Mammary epithelial cell (primary cell): ENCODE measurements at regions of chr14 and their contacts with region 1.

Region 1: DNA sequence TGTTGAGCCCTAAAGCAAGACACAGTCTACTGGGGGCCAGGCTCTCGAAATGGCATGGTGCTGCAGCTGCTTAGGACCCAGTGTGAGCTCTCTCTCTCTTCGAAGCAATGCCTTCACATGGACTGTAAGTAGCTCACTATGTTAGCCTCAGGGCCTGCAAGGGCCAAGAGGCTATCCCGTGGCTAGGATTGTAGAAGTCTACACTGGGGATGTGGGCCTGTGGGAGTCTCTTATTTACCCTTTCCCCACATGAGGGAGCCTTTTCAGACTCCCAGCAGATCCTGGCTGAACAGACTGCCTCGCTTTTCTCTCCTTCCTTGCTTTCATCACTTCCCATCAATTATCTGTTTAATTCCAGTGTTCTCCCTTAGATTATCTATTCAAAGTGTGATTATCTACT is 101.4 kb downstream of the GPR65 start:
- DNase-seq: no peak
- H3K4me3 ChIP-seq: no peak overlapping the region
- H3K27ac ChIP-seq: no peak overlapping the region
- H3K4me1 ChIP-seq: no peaks in the 10 kb centered on the region
- H3K27me3 ChIP-seq: no peaks in the 10 kb centered on the region
- CTCF ChIP-seq: no peak

Region 2: DNA sequence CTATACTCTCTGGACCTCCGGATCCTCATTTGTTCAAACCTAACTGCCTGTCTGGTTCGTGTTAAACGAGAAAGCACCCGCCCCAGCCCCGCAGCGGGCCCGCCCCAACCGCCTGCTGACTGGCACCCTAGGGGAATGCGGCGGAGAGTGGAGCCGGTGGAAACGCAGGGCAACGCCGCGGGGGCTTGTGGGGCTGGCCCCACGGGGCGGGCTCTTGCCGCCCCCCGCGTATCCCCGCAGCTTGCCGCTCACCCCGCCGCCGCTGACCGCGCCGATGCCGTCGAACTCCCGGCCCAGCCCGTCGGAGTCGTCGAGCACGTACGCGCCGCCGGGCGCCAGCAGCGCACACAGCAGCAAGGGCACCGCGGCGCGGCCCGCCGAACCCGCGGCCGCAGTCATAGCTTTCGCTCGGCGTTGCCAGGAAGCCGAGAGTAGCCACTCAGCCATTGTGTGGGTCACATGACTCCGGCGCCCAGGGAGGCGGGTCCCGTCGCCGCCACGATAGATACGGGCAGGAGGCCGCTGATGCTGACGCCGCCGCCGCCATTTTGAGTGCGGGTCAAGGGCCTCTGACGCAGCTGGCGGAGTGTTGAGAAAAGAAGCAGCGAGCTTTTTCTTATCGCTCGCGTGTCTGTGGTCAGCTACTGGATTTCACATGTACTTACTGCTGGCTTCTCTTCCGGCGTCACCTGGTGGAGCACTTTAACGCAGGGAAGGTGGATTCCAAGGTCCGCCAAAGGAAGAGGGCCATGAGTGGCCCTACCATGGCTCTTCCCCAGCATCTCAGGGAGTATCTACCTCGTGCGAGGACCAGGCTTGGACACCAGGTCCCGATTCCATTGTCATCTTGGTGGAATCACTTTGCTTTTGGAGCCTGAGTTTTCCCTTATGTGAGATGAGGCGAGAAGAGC is 113.4 kb before region 1 on chr14 and contains the start of gene GALC:
- CTCF ChIA-PET with region 1: no interaction called
- dilution Hi-C with region 1: no loop called
- in situ Hi-C with region 1: no loop called
- intact Hi-C with region 1: no loop called
- DNase-seq: peak; percentile 75
- H3K4me3 ChIP-seq: peak within 1 kb of the TSS; percentile 39 to 62 (median 60)
- H3K27ac ChIP-seq: peak within 1 kb of the TSS; percentile 15
- H3K4me1 ChIP-seq: peaks cover 8% of the 10 kb centered on the region
- H3K27me3 ChIP-seq: no peaks in the 10 kb centered on the region
- CTCF ChIP-seq: peak in 1 of 2 donors; percentile 7
- total RNA-seq, gene GALC: 7.1 to 20.2 TPM

Region 3: DNA sequence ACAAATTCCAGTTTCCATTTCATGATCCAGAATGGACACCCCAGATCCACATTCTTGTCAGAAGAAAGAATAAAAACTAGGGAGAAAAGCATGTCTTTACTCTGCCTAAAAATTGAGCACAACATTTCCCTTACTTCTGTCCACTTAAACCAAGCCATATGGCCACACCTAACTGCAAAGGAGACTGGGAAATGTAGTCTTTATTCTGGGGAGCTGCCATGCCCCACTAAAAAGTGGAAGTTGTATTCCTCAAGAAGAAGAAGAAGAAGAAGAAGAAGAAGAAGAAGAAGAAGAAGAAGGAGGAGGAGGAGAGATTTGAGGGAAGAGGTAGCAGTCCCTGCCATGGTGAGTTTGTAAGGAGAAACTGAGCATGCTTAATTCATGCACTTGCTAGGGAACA is 16.9 kb before region 1 on chr14:
- CTCF ChIA-PET with region 1: interaction called, 10 read pairs
- dilution Hi-C with region 1: no loop called
- in situ Hi-C with region 1: no loop called
- intact Hi-C with region 1: no loop called
- DNase-seq: no peak
- H3K4me3 ChIP-seq: no peak overlapping the region
- H3K27ac ChIP-seq: no peak overlapping the region
- H3K4me1 ChIP-seq: no peaks in the 10 kb centered on the region
- H3K27me3 ChIP-seq: peaks cover 2% of the 10 kb centered on the region
- CTCF ChIP-seq: no peak